Activated B cell treated with CpG ODN at 0.5 μM for 24 hours (primary cell): ENCODE measurements at regions of chr6 and their contacts with region 1.

Region 1: GRCh38 chr6:52419809-52420670 is at the start of gene EFHC1:
- DNase-seq: peak; percentile 97
- ATAC-seq: peak; percentile 90
- H3K4me3 Mint-ChIP-seq: no peak within 1 kb of the TSS
- H3K27ac Mint-ChIP-seq: no peak within 1 kb of the TSS
- H3K4me1 Mint-ChIP-seq: peaks cover 16% of the 10 kb centered on the region
- H3K27me3 Mint-ChIP-seq: no peaks in the 10 kb centered on the region
- CTCF ChIP-seq: no peak
- total RNA-seq, gene EFHC1: 15.8 and 23.2 TPM in 2 replicates

Region 2: DNA sequence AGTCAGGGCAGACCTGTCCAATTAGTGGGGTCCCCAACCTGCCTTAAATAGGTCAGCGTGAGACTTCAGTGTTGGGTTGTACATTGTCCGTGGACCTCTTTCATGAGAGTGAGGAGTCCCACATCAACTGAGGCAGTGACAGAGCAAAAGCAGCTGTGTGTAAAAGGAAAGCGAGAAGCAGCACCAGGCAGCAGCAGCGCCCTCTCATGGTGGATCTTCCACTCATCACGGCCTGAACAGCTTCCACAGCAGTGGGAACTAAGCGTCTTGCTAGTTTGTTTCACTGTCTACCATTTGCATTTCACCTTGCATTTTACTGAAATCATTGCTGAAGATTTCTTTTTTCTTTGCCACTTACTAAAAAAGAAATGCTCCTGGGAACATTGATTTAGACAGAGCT is 666.4 kb before region 1 on chr6:
- CTCF ChIA-PET with region 1: no interaction called
- POLR2A ChIA-PET with region 1: no interaction called
- intact Hi-C with region 1: no loop called
- DNase-seq: no peak
- ATAC-seq: no peak
- H3K4me3 Mint-ChIP-seq: no peak overlapping the region
- H3K27ac Mint-ChIP-seq: no peak overlapping the region
- H3K4me1 Mint-ChIP-seq: no peaks in the 10 kb centered on the region
- H3K27me3 Mint-ChIP-seq: peaks cover 3% of the 10 kb centered on the region
- CTCF ChIP-seq: no peak

Region 3: DNA sequence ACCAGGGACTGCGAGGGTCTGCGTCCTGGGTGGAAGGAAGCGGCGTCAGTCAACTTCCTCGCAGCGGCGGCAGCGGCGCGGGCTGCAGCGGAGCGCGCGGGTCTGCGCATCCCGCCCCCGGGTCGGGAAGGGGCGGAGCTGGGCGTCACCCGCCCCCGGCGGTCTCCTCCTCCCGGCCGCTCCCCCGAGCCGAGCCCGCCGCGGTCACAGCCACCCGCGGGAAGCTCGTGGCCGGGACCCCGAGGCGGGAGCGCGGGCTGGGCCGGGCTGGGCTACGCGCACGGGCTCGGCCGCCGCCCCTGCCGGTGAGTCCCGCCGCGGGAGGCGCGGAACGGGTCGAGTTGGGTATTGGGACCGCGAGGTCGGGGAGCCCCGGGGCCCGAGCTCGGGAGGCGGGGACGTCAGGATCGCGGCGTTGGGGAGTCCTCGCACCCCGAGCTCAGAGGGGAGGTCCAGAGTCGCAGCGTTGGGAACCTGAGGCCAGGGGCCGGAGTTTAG is 58.0 kb before region 1 on chr6 and contains the start of gene PAQR8:
- CTCF ChIA-PET with region 1: no interaction called
- POLR2A ChIA-PET with region 1: no interaction called
- intact Hi-C with region 1: loop called (anchors 1 kb)
- DNase-seq: peak; percentile 86
- ATAC-seq: peak; percentile 93
- H3K4me3 Mint-ChIP-seq: peak within 1 kb of the TSS; percentile 97
- H3K27ac Mint-ChIP-seq: peak within 1 kb of the TSS; percentile 86
- H3K4me1 Mint-ChIP-seq: peaks cover 25% of the 10 kb centered on the region
- H3K27me3 Mint-ChIP-seq: no peaks in the 10 kb centered on the region
- CTCF ChIP-seq: no peak
- total RNA-seq, gene PAQR8: 6.8 and 8.0 TPM in 2 replicates

Region 4: GRCh38 chr6:52497652-52498408 is 77.8 kb after region 1 on chr6:
- CTCF ChIA-PET with region 1: interaction called, 7 read pairs
- POLR2A ChIA-PET with region 1: interaction called, 6 read pairs
- intact Hi-C with region 1: loop called (anchors 1 kb)
- DNase-seq: peak; percentile 37
- ATAC-seq: peak; percentile 77
- H3K4me3 Mint-ChIP-seq: peak overlapping the region; percentile 60
- H3K27ac Mint-ChIP-seq: peak overlapping the region; percentile 98
- H3K4me1 Mint-ChIP-seq: peaks cover 66% of the 10 kb centered on the region
- H3K27me3 Mint-ChIP-seq: no peaks in the 10 kb centered on the region
- CTCF ChIP-seq: no peak

Region 5: GRCh38 chr6:52577022-52577777 is 157.2 kb after region 1 on chr6 and contains the start of gene TRAM2:
- CTCF ChIA-PET with region 1: interaction called, 9 read pairs
- POLR2A ChIA-PET with region 1: interaction called, 16 read pairs
- intact Hi-C with region 1: loop called (anchors 1 kb)
- DNase-seq: peak; percentile 88
- ATAC-seq: peak; percentile 85
- H3K4me3 Mint-ChIP-seq: peak within 1 kb of the TSS; percentile 87
- H3K27ac Mint-ChIP-seq: peak within 1 kb of the TSS; percentile 83
- H3K4me1 Mint-ChIP-seq: peaks cover 46% of the 10 kb centered on the region
- H3K27me3 Mint-ChIP-seq: no peaks in the 10 kb centered on the region
- CTCF ChIP-seq: no peak
- total RNA-seq, gene TRAM2: 9.1 and 9.9 TPM in 2 replicates

Region 6: GRCh38 chr6:52590152-52590931 is 170.3 kb after region 1 on chr6:
- CTCF ChIA-PET with region 1: no interaction called
- POLR2A ChIA-PET with region 1: no interaction called
- intact Hi-C with region 1: no loop called
- DNase-seq: no peak
- ATAC-seq: no peak
- H3K4me3 Mint-ChIP-seq: no peak overlapping the region
- H3K27ac Mint-ChIP-seq: no peak overlapping the region
- H3K4me1 Mint-ChIP-seq: peaks cover 8% of the 10 kb centered on the region
- H3K27me3 Mint-ChIP-seq: no peaks in the 10 kb centered on the region
- CTCF ChIP-seq: no peak

Region 7: GRCh38 chr6:52647199-52647598 is 227.2 kb after region 1 on chr6:
- CTCF ChIA-PET with region 1: interaction called, 14 read pairs
- POLR2A ChIA-PET with region 1: no interaction called
- intact Hi-C with region 1: no loop called
- DNase-seq: no peak
- ATAC-seq: no peak
- H3K4me3 Mint-ChIP-seq: no peak overlapping the region
- H3K27ac Mint-ChIP-seq: no peak overlapping the region
- H3K4me1 Mint-ChIP-seq: peaks cover 6% of the 10 kb centered on the region
- H3K27me3 Mint-ChIP-seq: peaks cover 15% of the 10 kb centered on the region
- CTCF ChIP-seq: no peak

Region 8: DNA sequence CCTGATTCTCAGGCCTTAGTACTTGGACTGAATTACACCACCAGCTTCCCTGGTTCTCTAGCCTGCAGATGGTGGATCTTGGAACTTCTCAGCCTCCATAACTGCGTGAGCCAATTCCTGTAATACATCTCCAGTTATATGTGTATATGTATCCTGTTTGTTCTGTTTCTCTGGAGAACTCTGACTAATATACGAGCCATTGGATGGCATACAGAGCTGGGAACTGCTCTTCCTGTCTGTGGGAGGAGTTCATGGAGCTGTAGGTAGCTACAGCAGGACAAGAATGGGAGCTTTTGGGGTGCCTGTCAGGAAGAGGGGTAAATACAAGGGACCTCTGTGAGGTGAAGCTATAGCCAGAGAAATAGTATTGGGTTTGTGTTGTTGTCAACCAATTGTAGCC is 292.1 kb after region 1 on chr6:
- CTCF ChIA-PET with region 1: no interaction called
- POLR2A ChIA-PET with region 1: no interaction called
- intact Hi-C with region 1: no loop called
- DNase-seq: no peak
- ATAC-seq: no peak
- H3K4me3 Mint-ChIP-seq: no peak overlapping the region
- H3K27ac Mint-ChIP-seq: no peak overlapping the region
- H3K4me1 Mint-ChIP-seq: no peaks in the 10 kb centered on the region
- H3K27me3 Mint-ChIP-seq: peaks cover 16% of the 10 kb centered on the region
- CTCF ChIP-seq: no peak

Region 9: GRCh38 chr6:53064726-53065215 is 644.7 kb after region 1 on chr6:
- CTCF ChIA-PET with region 1: no interaction called
- POLR2A ChIA-PET with region 1: no interaction called
- intact Hi-C with region 1: loop called (anchors 1 kb)
- DNase-seq: peak; percentile 82
- ATAC-seq: peak; percentile 81
- H3K4me3 Mint-ChIP-seq: peak overlapping the region; percentile 100
- H3K27ac Mint-ChIP-seq: peak overlapping the region; percentile 99
- H3K4me1 Mint-ChIP-seq: peaks cover 57% of the 10 kb centered on the region
- H3K27me3 Mint-ChIP-seq: no peaks in the 10 kb centered on the region
- CTCF ChIP-seq: no peak